ENCODE measurements at regions of chr21 and their contacts with region 1.

Region 1: GRCh38 chr21:34888569-34889319 is 160.4 kb downstream of the RUNX1 start:
- DNase-seq: peak; percentile 83 to 89
- ATAC-seq: peak; percentile 72 to 79
- H3K4me3 ChIP-seq: peak overlapping the region; percentile 72
- H3K27ac ChIP-seq: peak overlapping the region; percentile 98 to 100
- H3K4me1 ChIP-seq: peaks cover 16% of the 10 kb centered on the region
- CTCF ChIP-seq: no peak
- EP300 ChIP-seq: no peak
- POLR2A ChIP-seq: peak; percentile 89
- RAD21 ChIP-seq: no peak

Region 2: GRCh38 chr21:34801519-34802132 is 87.1 kb before region 1 on chr21:
- CTCF ChIA-PET with region 1: no interaction called
- POLR2A ChIA-PET with region 1: interaction called, 14 read pairs
- DNase-seq: peak; percentile 22 to 46
- ATAC-seq: peak; percentile 77 to 79; a peak in 4 of 6 replicates
- H3K4me3 ChIP-seq: no peak overlapping the region
- H3K27ac ChIP-seq: peak overlapping the region; percentile 79 to 81
- H3K4me1 ChIP-seq: peaks cover 58% of the 10 kb centered on the region
- CTCF ChIP-seq: peak; percentile 28; the same call in 2 of the 3 replicates
- EP300 ChIP-seq: no peak
- POLR2A ChIP-seq: no peak
- RAD21 ChIP-seq: peak; percentile 56 to 59

Region 3: DNA sequence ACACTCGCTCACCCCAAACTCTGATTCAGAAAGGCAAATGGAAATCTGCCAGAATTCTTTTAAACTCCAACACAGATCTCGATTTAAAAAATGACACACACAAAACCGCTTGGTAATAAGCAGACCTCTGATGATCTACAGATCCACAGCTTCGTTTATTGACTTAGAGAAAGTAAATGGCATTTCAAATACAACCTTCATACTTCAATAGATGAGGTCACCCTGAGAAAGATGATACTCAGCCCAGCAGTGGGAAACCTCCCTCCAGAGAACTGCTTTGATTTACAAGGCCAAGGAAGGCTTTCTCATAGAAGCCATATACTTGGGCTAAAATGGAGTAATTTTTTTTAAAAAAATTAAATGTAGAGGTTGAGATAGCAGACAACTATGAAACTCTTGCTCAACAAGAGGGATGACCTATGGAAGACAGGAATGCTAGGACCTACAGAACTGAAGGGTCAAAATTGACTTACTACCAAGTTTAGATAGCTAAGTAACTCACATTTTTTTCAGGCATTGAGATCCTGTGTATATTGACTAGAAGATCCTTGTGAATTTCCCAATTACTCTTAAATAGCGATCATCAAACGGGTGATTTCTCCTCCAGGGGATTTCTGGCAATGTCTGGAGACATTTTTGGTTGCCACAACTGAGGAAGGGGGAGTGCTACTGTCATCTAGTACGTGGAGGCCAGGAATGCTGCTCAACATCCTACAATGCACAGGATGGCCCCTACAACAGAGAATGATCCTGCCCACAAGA is 76.1 kb before region 1 on chr21:
- CTCF ChIA-PET with region 1: interaction called, 4 read pairs
- POLR2A ChIA-PET with region 1: interaction called, 13 read pairs
- DNase-seq: peak in 1 of 2 experiments; percentile 74
- ATAC-seq: peak; percentile 57 to 62; a peak in 5 of 6 replicates
- H3K4me3 ChIP-seq: no peak overlapping the region; the same call in 2 of the 3 replicates
- H3K27ac ChIP-seq: peak overlapping the region; percentile 95 to 97
- H3K4me1 ChIP-seq: peaks cover 78% of the 10 kb centered on the region
- CTCF ChIP-seq: no peak
- EP300 ChIP-seq: peak in 1 of 2 experiments; percentile 79; a peak in 3 of 5 replicates
- POLR2A ChIP-seq: no peak
- RAD21 ChIP-seq: no peak; a peak in 1 of 5 replicates

Region 4: GRCh38 chr21:34827445-34828235 is 61.1 kb before region 1 on chr21:
- CTCF ChIA-PET with region 1: no interaction called
- POLR2A ChIA-PET with region 1: no interaction called
- DNase-seq: no peak
- ATAC-seq: no peak
- H3K4me3 ChIP-seq: no peak overlapping the region
- H3K27ac ChIP-seq: no peak overlapping the region
- H3K4me1 ChIP-seq: no peaks in the 10 kb centered on the region
- CTCF ChIP-seq: no peak
- EP300 ChIP-seq: no peak
- POLR2A ChIP-seq: no peak
- RAD21 ChIP-seq: no peak

Region 5: GRCh38 chr21:35051287-35051818 is 162.6 kb after region 1 on chr21:
- CTCF ChIA-PET with region 1: interaction called, 9 read pairs
- POLR2A ChIA-PET with region 1: interaction called, 20 read pairs
- DNase-seq: peak; percentile 43 to 79
- ATAC-seq: peak; percentile 93 to 97
- H3K4me3 ChIP-seq: no peak overlapping the region
- H3K27ac ChIP-seq: peak overlapping the region; percentile 62 to 84
- H3K4me1 ChIP-seq: peaks cover 40% of the 10 kb centered on the region
- CTCF ChIP-seq: peak; percentile 51
- EP300 ChIP-seq: no peak
- POLR2A ChIP-seq: no peak
- RAD21 ChIP-seq: peak; percentile 55 to 68

Region 6: GRCh38 chr21:35400233-35400957 is 511.7 kb after region 1 on chr21:
- CTCF ChIA-PET with region 1: interaction called, 40 read pairs
- POLR2A ChIA-PET with region 1: interaction called, 30 read pairs
- DNase-seq: peak; percentile 5 to 65
- ATAC-seq: peak; percentile 75 to 85
- H3K4me3 ChIP-seq: no peak overlapping the region
- H3K27ac ChIP-seq: no peak overlapping the region
- H3K4me1 ChIP-seq: peaks cover 5% of the 10 kb centered on the region; the same call in 1 of the 3 replicates
- CTCF ChIP-seq: peak; percentile 63
- EP300 ChIP-seq: no peak
- POLR2A ChIP-seq: no peak
- RAD21 ChIP-seq: peak; percentile 83 to 87